ENCODE measurements at regions of chr16 and their contacts with region 1.

Region 1: DNA sequence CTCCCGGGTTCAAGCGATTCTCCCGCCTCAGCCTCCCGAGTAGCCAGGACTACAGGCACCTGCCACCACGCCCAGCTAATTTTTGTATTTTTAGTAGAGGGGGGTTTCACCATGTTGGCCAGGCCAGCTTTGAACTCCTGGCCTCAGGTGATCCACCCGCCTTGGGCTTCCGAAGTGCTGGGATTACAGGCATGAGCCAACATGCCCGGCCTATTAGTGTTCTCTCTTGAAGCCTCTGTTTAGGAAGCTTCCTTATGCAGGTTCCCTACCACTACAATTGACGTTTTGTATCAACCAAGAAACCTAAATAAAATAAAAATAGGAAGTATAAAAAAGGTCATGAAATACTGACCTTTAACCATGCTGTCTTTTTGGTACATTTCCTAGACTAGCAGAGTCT is 16.0 kb downstream of the CHST5 start:
- DNase-seq: no peak
- H3K4me3 ChIP-seq: no peak overlapping the region
- H3K27ac ChIP-seq: no peak overlapping the region
- H3K4me1 ChIP-seq: 0 out of 2 replicates have a peak, but pooled peaks cover 6% of the 10 kb centered on the region
- H3K27me3 ChIP-seq: no peaks in the 10 kb centered on the region
- CTCF ChIP-seq: no peak

Region 2: DNA sequence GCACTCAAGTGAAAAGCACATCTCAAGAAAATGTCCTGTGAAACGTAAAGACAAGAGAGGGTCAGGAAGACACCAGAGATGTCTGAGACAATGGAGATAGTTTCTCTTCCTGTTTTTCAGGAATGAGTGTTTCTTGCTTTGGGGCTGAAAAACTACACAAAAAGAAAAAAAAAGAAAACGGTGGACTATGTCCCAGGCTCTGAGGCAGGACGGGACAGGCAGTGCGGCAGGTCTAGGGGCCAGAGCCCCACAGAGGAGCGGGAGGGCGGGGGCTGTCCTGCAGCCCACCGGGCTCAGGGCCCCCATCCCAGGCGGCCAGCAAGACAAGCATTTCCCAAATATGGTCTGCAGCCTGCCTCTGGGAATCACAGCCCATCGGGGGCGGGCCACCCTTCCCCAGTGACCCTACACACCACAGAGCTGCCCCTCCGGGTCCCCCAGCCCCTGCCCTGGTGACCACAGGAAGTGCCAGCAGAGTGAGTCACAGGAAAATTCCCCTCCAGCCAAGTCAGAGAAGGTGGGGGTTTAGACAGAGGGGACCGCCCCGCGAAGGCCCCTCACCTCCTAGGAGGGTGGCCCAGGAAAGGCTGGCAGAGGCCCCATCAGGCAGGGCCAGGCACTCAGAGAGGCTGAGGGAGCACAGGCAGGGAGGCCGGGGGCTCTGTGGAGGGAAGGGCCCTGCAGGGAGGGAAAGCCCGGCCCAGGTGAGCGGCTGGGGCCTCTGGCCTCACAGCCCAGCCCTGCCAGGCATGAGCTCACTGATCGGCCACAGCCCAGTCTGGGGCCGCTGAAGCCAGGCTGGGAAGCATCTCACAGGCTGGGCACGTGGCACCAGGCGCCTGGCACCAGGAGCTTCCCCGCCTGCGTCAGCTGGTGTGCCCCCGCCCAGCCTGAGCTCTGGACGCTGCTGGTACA is 274.8 kb before region 1 on chr16:
- CTCF ChIA-PET with region 1: interaction called, 10 read pairs
- POLR2A ChIA-PET with region 1: no interaction called
- intact Hi-C with region 1: no loop called
- DNase-seq: peak; percentile 93 to 96
- H3K4me3 ChIP-seq: peak overlapping the region; percentile 30; the same call in 1 of the 2 replicates
- H3K27ac ChIP-seq: peak overlapping the region; percentile 83
- H3K4me1 ChIP-seq: peaks cover 65% of the 10 kb centered on the region
- H3K27me3 ChIP-seq: no peaks in the 10 kb centered on the region
- CTCF ChIP-seq: no peak

Region 3: GRCh38 chr16:75471723-75472633 is 47.9 kb before region 1 on chr16:
- CTCF ChIA-PET with region 1: interaction called, 7 read pairs
- POLR2A ChIA-PET with region 1: no interaction called
- intact Hi-C with region 1: loop called (anchors 1 kb)
- DNase-seq: peak; percentile 45 to 54
- H3K4me3 ChIP-seq: no peak overlapping the region
- H3K27ac ChIP-seq: no peak overlapping the region
- H3K4me1 ChIP-seq: 0 out of 2 replicates have a peak, but pooled peaks cover 5% of the 10 kb centered on the region
- H3K27me3 ChIP-seq: no peaks in the 10 kb centered on the region
- CTCF ChIP-seq: peak; percentile 81

Region 4: GRCh38 chr16:75502916-75503605 is 16.8 kb before region 1 on chr16:
- CTCF ChIA-PET with region 1: interaction called, 12 read pairs
- POLR2A ChIA-PET with region 1: no interaction called
- intact Hi-C with region 1: no loop called
- DNase-seq: no peak
- H3K4me3 ChIP-seq: no peak overlapping the region
- H3K27ac ChIP-seq: no peak overlapping the region
- H3K4me1 ChIP-seq: peaks cover 37% of the 10 kb centered on the region
- H3K27me3 ChIP-seq: no peaks in the 10 kb centered on the region
- CTCF ChIP-seq: no peak

Region 5: DNA sequence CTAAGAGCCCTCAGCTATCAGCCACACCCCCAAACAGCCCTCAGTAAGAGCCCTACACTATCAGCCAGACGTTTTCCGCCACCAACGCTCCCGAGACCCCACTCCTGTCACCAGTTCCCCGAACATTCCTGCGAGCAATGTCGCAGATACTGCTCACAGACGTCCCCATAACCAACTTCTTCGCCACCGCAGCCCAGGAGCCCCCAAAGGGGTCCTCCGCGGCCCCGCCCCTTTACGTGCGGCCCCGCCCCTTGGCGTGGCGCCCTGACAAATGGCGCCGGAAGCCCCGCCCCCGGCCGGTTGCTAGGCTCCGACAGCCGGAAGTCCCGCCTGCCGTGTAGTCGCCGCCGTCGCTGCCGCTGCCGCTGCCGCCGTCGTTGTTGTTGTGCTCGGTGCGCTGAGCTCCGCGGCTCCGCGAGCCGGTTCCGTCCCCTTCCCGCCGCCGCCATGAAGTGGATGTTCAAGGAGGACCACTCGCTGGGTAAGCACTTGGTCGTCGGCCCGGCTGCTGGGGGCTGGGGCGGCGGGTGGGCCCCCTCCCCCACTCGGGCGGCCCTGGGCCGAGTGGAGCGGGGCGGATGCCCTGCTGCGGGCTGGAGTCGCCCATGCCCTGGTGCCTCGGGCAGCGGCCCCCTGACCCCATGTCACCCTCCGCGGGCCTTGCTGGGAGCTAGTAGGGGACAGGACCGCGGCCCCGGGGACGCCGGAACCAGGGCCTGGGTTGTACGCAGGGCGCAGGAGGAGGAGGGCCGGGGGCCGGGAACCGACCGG is 46.3 kb after region 1 on chr16 and contains the start of gene GABARAPL2:
- CTCF ChIA-PET with region 1: interaction called, 12 read pairs
- POLR2A ChIA-PET with region 1: no interaction called
- intact Hi-C with region 1: loop called (anchors 2 kb)
- DNase-seq: peak; percentile 57 to 82
- H3K4me3 ChIP-seq: peak within 1 kb of the TSS; percentile 94
- H3K27ac ChIP-seq: no peak within 1 kb of the TSS
- H3K4me1 ChIP-seq: peaks cover 17% of the 10 kb centered on the region; the same call in 1 of the 2 replicates
- H3K27me3 ChIP-seq: no peaks in the 10 kb centered on the region
- CTCF ChIP-seq: no peak
- total RNA-seq, gene GABARAPL2: 86.1 and 103 TPM in 2 replicates

Region 6: DNA sequence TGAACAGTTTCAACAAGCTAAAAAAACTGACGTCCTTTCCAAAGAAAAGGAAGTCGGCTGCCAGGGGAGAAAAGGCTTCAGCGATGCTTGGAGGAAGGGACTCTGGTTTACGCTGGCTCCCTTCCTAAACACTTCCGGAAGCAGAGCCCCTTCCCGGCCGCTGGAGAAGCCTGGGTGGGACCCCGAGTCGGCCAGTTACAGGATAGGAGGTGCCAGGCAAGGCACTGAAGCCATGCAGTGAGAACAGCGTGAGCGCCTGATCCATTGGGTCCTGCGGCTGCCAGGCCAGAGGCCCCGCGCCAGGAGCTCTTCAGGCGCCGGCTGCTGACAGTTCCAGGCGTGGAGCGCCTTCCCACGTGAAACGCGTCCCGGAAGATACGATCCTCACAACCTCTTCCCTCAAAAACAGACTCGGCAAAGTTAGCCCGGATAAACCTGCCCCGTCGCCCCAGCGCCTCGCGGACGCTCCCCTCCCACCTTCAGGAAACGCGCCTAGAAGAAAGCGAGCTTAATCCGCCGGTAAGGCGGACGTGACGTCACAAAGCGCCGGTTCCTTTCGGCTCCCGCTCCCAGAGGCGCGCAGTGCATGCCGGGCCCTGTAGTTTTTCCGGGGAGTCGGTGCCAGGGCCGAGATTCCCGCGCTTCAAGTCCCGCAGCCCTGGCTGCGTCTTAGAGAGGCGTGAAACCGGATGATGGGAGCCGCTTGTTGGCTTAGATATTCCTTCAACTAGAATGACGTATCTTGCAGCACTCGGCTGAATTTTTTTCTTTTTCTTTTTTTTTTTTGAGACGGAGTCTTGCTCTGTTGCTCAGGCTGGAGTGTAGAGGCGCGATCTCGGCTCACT is 103.1 kb after region 1 on chr16 and contains the start of gene ADAT1:
- CTCF ChIA-PET with region 1: interaction called, 11 read pairs
- POLR2A ChIA-PET with region 1: interaction called, 14 read pairs
- intact Hi-C with region 1: loop called (anchors 1 kb)
- DNase-seq: peak; percentile 94 to 95
- H3K4me3 ChIP-seq: peak within 1 kb of the TSS; percentile 88
- H3K27ac ChIP-seq: peak within 1 kb of the TSS; percentile 59
- H3K4me1 ChIP-seq: peaks cover 17% of the 10 kb centered on the region
- H3K27me3 ChIP-seq: no peaks in the 10 kb centered on the region
- CTCF ChIP-seq: no peak
- total RNA-seq, gene ADAT1: 57.9 and 66.4 TPM in 2 replicates

Region 7: DNA sequence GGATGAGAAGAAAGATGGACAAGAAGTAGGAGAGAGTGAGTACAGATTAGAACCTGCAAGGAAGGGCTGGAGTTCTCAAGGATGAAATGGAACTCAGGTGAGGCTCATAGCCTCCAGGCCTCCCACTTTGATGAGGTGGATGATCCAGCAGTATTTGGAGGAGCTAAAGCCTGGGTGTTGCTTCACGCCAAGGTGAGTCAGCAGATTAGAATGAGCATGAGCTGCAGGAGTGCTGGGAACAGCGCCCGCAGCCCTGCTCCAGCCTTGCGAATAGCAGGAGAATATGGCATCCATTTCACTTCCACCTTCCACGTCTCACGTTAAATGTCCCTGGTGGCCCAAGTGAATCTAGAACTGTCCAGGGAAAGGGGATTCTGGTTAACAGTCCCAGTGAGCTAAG is 300.8 kb after region 1 on chr16:
- CTCF ChIA-PET with region 1: no interaction called
- POLR2A ChIA-PET with region 1: no interaction called
- intact Hi-C with region 1: no loop called
- DNase-seq: peak; percentile 10 to 56
- H3K4me3 ChIP-seq: no peak overlapping the region
- H3K27ac ChIP-seq: no peak overlapping the region
- H3K4me1 ChIP-seq: no peaks in the 10 kb centered on the region
- H3K27me3 ChIP-seq: peaks cover 17% of the 10 kb centered on the region
- CTCF ChIP-seq: no peak